Activated naive CD4-positive, alpha-beta T cell treated with anti-CD3 and anti-CD28 coated beads for 36 hours (primary cell): ENCODE measurements at regions of chr12 and their contacts with region 1.

Region 1: GRCh38 chr12:14970473-14970872 is 2.4 kb upstream of the PDE6H start:
- DNase-seq: no peak
- H3K4me3 Mint-ChIP-seq: no peak overlapping the region
- H3K27ac Mint-ChIP-seq: no peak overlapping the region
- H3K4me1 Mint-ChIP-seq: peaks cover 68% of the 10 kb centered on the region
- H3K27me3 Mint-ChIP-seq: no peaks in the 10 kb centered on the region

Region 2: GRCh38 chr12:14795028-14795448 is 175.4 kb before region 1 on chr12:
- CTCF ChIA-PET with region 1: no interaction called
- intact Hi-C with region 1: no loop called
- DNase-seq: no peak
- H3K4me3 Mint-ChIP-seq: no peak overlapping the region
- H3K27ac Mint-ChIP-seq: no peak overlapping the region
- H3K4me1 Mint-ChIP-seq: peaks cover 6% of the 10 kb centered on the region
- H3K27me3 Mint-ChIP-seq: no peaks in the 10 kb centered on the region

Region 3: GRCh38 chr12:14981049-14981448 is 10.6 kb after region 1 on chr12:
- CTCF ChIA-PET with region 1: interaction called, 6 read pairs
- intact Hi-C with region 1: loop called (anchors 1 kb)
- DNase-seq: no peak
- H3K4me3 Mint-ChIP-seq: no peak overlapping the region
- H3K27ac Mint-ChIP-seq: no peak overlapping the region
- H3K4me1 Mint-ChIP-seq: peaks cover 65% of the 10 kb centered on the region
- H3K27me3 Mint-ChIP-seq: no peaks in the 10 kb centered on the region

Region 4: DNA sequence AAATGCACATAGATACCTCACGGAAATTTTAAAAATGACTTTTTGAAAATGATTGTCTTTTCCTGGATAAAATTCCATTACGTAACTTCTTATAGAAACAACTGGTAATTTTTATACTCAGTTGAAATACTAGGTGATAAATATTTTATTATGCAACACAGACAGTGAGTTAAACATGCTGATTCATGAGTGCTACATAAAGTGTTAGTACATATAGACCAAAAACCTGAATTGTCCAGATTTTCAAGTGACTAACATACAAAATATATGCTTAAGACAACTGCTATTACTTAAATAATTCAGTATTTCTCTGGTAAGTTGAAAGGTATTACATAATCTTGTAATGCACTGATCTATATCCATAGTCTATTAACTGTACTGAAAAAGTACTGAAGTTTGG is 363.8 kb after region 1 on chr12:
- CTCF ChIA-PET with region 1: no interaction called
- intact Hi-C with region 1: no loop called
- DNase-seq: no peak
- H3K4me3 Mint-ChIP-seq: no peak overlapping the region
- H3K27ac Mint-ChIP-seq: no peak overlapping the region
- H3K4me1 Mint-ChIP-seq: no peaks in the 10 kb centered on the region
- H3K27me3 Mint-ChIP-seq: peaks cover 6% of the 10 kb centered on the region